Motor neuron (in vitro differentiated cells): ENCODE measurements at regions of chr2 and their contacts with region 1.

Region 1: DNA sequence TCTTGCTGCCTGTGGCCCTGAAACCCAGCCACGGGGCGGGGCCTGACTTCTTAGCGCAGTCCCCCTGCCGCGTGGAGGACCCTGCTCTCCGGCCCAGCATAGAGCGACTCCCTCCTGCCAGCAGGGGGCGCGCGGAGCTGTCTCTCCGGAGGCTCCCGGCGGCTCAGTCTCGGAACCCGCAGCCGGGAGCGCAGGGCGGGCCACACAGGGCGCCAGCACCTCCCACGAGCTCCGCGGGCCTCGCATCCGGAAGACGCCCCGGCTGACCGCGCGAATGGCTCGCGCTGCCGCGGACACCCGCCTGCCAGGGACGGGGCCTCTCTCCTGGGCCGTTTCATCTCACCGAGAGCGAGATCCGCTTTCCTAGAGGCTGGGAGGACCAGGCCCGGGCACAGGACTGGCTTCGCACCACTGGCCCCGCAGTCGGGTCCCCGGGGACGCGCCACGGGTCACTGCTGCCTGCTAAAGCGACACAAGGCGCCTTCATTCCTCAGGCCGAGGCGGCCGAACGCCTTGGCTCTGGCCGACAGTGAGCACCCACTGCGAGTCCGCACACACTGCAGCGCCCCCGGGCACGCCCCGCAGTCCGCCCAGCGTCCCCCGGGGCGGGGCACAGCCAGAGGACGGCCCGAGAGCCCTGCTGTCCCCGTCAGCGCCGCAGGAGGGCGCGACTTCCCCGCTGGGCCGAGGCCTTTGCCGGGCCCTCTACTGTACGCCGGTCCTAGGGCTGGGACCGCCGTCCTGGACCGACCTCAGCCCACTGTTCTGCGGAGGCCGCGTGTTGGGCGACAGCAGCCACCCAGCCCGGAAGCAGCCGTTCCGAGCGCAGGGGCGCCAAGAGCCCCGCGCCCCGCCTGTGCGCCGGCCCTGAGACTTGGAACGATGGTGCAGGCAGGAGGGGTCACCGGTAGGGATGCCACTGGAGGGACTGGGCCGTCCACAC is 39.0 kb upstream of the ARHGEF4 start:
- ATAC-seq: peak; percentile 84 to 91 (median 88)
- H3K4me3 ChIP-seq: peak overlapping the region; percentile 42 to 58 (median 57)
- H3K27ac ChIP-seq: peak overlapping the region; percentile 77 to 87
- H3K4me1 ChIP-seq: peaks cover 6 to 18% of the 10 kb centered on the region in 2 donors

Region 2: DNA sequence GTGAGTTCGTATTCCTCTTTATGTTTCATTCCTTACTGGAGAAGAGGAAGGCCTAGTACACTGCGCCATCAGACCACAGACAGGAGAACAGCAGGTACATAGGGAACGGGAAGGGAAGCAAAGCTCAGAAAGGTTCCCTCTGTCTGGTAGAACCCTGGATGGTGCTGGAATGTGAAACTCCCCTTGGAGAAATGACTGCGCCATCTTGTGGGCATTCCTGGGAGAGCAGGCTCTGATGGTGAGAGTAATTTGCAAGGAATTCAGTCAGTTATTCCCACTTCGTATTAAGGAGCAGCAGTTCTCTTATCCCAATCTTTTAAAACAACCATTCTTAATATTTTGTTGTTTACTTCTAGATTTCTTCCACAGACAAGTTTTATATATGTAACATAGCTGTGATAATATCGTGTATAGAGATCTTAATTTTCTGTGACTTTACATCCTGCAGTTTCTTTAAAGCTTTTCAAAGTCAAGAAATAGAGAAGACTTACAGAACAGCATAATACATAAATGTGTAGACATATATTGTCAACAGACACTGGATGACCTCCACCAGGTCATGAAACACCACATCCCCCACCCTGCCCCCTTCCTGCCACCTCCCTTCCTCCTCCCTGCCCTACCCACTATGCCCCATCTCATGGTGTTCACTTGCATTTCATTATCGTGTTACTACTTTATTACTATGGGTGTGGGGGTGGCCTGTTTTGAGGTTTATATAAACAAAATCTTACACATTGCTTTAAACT is 122.8 kb after region 1 on chr2:
- in situ Hi-C with region 1: loop called in 2 of 9 experiments (anchors 25 kb)
- ATAC-seq: peak; percentile 76 to 97 (median 92)
- H3K4me3 ChIP-seq: no peak overlapping the region
- H3K27ac ChIP-seq: no peak overlapping the region
- H3K4me1 ChIP-seq: no peaks in the 10 kb centered on the region